Posterior cingulate gyrus (tissue), 11 donors: ENCODE measurements at regions of chr6 and their contacts with region 1.

Region 1: GRCh38 chr6:167898673-167899311 is 72.1 kb downstream of the AFDN start:
- DNase-seq: no peak

Region 2: GRCh38 chr6:167485186-167485978 is 413.4 kb before region 1 on chr6:
- intact Hi-C with region 1: loop called (anchors 2 kb)
- DNase-seq: peak in 2 of 10 donors; percentile 51 to 62

Region 3: GRCh38 chr6:167647306-167647705 is 251.5 kb before region 1 on chr6:
- intact Hi-C with region 1: no loop called
- DNase-seq: peak in 1 of 10 donors; percentile 21

Region 4: GRCh38 chr6:168319274-168320111 is 420.7 kb after region 1 on chr6 and contains the start of gene DACT2:
- intact Hi-C with region 1: no loop called
- DNase-seq: no peak